ENCODE measurements at regions of chr6 and their contacts with region 1.

Region 1: DNA sequence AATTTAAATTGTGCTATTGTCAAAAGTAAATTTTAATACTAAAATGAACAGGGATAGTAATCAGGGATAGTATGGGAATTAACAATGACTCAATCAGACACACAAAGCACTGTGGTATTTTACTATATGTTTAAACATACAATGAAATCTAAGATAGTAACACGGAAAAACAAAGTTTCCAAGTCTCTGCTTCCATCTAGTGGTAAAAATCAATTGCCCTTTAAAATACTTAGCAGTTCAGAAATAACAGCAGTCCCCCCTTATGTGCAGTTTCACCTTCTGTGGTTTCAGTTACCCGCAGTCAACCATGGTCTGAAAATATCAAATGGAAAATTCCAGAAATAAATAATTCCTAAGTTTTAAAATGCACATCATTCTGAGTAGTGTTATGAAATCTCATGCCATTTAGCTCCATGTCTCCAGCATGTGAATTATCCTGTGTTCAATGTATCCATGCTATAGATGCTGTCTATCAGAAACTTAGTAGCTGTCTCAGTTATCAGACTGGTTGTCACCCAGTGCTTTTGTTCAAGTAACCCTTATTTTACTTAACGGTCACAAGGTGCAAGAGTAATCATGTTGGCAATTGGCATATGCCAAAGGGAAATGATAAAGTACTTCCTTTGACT is 58.5 kb downstream of the AHI1 start:
- DNase-seq: peak in 3 of 14 experiments; percentile 40 to 50 (median 50)
- ATAC-seq: peak; percentile 44
- H3K4me3 ChIP-seq: no peak overlapping the region
- H3K4me3 Mint-ChIP-seq: peak overlapping the region; percentile 30
- H3K27ac ChIP-seq: no peak overlapping the region
- H3K27ac Mint-ChIP-seq: peak overlapping the region; percentile 68
- H3K4me1 ChIP-seq: no peaks in the 10 kb centered on the region
- H3K4me1 Mint-ChIP-seq: peaks cover 21% of the 10 kb centered on the region
- H3K27me3 ChIP-seq: no peaks in the 10 kb centered on the region
- H3K27me3 Mint-ChIP-seq: no peaks in the 10 kb centered on the region
- CTCF ChIP-seq: peak; percentile 57

Region 2: DNA sequence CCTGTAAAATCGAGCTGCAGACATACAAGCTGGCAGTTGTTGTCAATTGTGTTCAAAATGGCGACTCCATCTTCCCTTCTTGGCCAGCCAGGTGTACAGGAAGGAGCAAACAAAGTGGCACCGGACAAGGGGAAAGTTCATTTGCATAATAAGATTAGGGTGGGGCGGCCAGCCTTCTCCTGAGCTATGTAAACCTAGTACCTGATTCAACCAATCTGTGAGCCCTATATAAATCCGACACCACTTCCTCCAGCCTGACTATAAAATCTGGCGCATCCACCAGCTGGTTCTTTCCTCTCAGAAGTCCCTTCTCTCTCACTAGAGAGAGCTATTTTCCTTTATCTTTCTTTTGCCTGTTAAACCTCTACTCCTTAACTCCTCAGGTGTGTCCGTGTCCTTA is 376.3 kb before region 1 on chr6:
- CTCF ChIA-PET with region 1: no interaction called
- POLR2A ChIA-PET with region 1: no interaction called
- intact Hi-C with region 1: loop called in 1 of 2 experiments (anchors 10 kb)
- DNase-seq: no peak
- ATAC-seq: no peak
- H3K4me3 ChIP-seq: no peak overlapping the region
- H3K4me3 Mint-ChIP-seq: no peak overlapping the region
- H3K27ac ChIP-seq: no peak overlapping the region
- H3K27ac Mint-ChIP-seq: no peak overlapping the region
- H3K4me1 ChIP-seq: no peaks in the 10 kb centered on the region
- H3K4me1 Mint-ChIP-seq: no peaks in the 10 kb centered on the region
- H3K27me3 ChIP-seq: no peaks in the 10 kb centered on the region
- H3K27me3 Mint-ChIP-seq: no peaks in the 10 kb centered on the region
- CTCF ChIP-seq: no peak

Region 3: GRCh38 chr6:135586841-135587240 is 147.8 kb after region 1 on chr6:
- CTCF ChIA-PET with region 1: no interaction called
- POLR2A ChIA-PET with region 1: no interaction called
- intact Hi-C with region 1: no loop called
- DNase-seq: peak in 3 of 14 experiments; percentile 13 to 44 (median 26)
- ATAC-seq: no peak
- H3K4me3 ChIP-seq: no peak overlapping the region
- H3K4me3 Mint-ChIP-seq: no peak overlapping the region
- H3K27ac ChIP-seq: no peak overlapping the region
- H3K27ac Mint-ChIP-seq: no peak overlapping the region
- H3K4me1 ChIP-seq: peaks cover 2% of the 10 kb centered on the region
- H3K4me1 Mint-ChIP-seq: peaks cover 11% of the 10 kb centered on the region
- H3K27me3 ChIP-seq: no peaks in the 10 kb centered on the region
- H3K27me3 Mint-ChIP-seq: no peaks in the 10 kb centered on the region
- CTCF ChIP-seq: no peak

Region 4: DNA sequence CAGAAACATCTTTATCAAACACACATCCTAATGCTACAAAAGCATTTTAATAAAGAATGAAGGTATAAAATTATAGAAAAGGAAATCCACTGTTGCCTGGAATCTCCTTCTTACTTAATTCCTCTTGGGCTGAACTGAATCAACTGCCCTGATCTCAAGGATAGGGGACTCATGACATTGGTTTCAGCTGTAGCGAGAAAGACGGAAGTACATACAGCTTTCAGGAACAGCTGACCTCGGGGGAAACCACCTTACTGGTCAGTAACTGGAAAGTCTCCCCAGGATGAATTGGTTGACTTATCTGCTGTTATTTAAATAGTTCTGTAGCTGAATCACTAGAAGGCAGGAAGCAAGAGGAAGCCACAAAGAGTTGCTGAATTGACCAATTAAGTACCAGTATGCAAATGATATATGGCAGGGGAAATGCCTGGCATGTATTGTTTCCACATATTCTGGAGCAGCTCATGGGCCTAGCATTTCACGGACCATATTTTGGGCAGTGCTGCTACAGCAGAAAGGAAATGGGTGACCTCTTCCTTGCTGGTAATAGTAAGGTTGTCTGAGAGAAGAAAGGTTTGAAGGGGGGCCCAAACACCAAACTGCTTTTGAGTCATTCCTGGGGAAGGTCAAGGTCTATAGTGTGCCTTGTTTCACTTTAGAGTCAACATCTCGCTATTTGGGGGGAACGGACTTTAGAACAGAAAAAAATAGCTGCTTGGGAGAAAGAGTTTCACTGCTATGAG is 1154.9 kb after region 1 on chr6:
- CTCF ChIA-PET with region 1: no interaction called
- POLR2A ChIA-PET with region 1: no interaction called
- intact Hi-C with region 1: no loop called
- DNase-seq: peak in 5 of 14 experiments; percentile 3 to 85 (median 73)
- ATAC-seq: peak; percentile 89
- H3K4me3 ChIP-seq: no peak overlapping the region
- H3K4me3 Mint-ChIP-seq: no peak overlapping the region
- H3K27ac ChIP-seq: peak overlapping the region in 1 of 2 donors; percentile 4
- H3K27ac Mint-ChIP-seq: peak overlapping the region; percentile 16
- H3K4me1 ChIP-seq: peaks cover 17% of the 10 kb centered on the region
- H3K4me1 Mint-ChIP-seq: peaks cover 13% of the 10 kb centered on the region
- H3K27me3 ChIP-seq: no peaks in the 10 kb centered on the region
- H3K27me3 Mint-ChIP-seq: no peaks in the 10 kb centered on the region
- CTCF ChIP-seq: no peak

Measured in CD4-positive, alpha-beta T cell (primary cell).